ENCODE measurements at regions of chr5 and their contacts with region 1.

Region 1: GRCh38 chr5:162230348-162230747 is 162.8 kb downstream of the GABRG2 start:
- DNase-seq: no peak
- H3K4me3 ChIP-seq: no peak overlapping the region
- H3K27ac ChIP-seq: no peak overlapping the region
- H3K4me1 ChIP-seq: no peaks in the 10 kb centered on the region
- H3K27me3 ChIP-seq: no peaks in the 10 kb centered on the region
- CTCF ChIP-seq: no peak
- POLR2A ChIP-seq: no peak

Region 2: GRCh38 chr5:161900981-161901380 is 329.4 kb before region 1 on chr5:
- intact Hi-C with region 1: loop called (anchors 5 kb)
- DNase-seq: no peak
- H3K4me3 ChIP-seq: no peak overlapping the region
- H3K27ac ChIP-seq: no peak overlapping the region
- H3K4me1 ChIP-seq: no peaks in the 10 kb centered on the region
- H3K27me3 ChIP-seq: no peaks in the 10 kb centered on the region
- CTCF ChIP-seq: no peak
- POLR2A ChIP-seq: no peak